Calu3 (cell line): ENCODE measurements at regions of chr16 and their contacts with region 1.

Region 1: DNA sequence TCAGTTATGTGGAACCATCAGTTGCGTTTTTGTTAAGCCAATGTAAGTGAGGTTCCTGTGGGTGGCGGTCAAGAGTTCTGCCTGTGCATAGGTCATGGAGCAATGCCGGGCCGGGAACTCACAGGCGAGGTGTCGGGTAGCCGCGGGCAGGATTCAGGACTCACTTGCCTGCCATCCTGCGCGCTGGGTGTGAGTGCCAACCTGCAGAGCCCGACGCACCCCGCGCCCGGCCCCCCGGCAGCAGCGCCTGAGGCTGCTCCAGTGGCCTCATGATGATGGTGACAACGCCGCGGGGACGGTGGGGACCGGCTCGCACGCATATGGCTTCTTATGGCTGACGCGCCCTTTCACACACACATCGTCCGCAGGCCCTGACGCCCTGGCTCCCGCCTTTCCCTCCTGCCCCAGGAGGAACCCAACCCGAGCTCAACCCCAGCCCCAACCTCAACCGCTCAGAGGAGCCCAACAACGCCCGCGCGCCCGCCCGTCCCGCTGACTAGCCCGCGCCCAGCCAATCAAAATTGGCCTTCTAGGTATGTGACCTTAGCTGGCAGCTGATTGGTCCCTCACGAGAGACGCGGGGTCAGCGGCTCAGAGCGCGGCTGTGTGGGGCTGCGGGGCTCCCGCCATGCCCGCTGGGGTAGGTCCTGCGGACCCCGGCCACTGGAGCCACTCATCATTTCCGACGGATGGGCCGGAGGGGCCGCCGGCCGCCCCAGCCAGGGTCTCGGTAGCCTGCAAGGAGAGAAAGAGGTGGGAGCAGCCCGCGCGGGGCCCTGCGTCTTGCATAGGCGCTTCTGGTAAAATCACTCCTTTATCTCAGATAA is at the start of gene C16orf95:
- DNase-seq: peak; percentile 98
- H3K4me3 Mint-ChIP-seq: peak within 1 kb of the TSS; percentile 98
- H3K27ac Mint-ChIP-seq: peak within 1 kb of the TSS; percentile 94
- H3K4me1 Mint-ChIP-seq: peaks cover 14% of the 10 kb centered on the region
- H3K27me3 Mint-ChIP-seq: no peaks in the 10 kb centered on the region
- CTCF ChIP-seq: peak; percentile 42
- total RNA-seq, gene C16orf95: 3.8 and 3.9 TPM in 2 replicates

Region 2: GRCh38 chr16:87216474-87217275 is 100.5 kb before region 1 on chr16:
- CTCF ChIA-PET with region 1: no interaction called
- intact Hi-C with region 1: no loop called
- DNase-seq: no peak
- H3K4me3 Mint-ChIP-seq: no peak overlapping the region
- H3K27ac Mint-ChIP-seq: no peak overlapping the region
- H3K4me1 Mint-ChIP-seq: no peaks in the 10 kb centered on the region
- H3K27me3 Mint-ChIP-seq: peaks cover 20% of the 10 kb centered on the region
- CTCF ChIP-seq: no peak

Region 3: DNA sequence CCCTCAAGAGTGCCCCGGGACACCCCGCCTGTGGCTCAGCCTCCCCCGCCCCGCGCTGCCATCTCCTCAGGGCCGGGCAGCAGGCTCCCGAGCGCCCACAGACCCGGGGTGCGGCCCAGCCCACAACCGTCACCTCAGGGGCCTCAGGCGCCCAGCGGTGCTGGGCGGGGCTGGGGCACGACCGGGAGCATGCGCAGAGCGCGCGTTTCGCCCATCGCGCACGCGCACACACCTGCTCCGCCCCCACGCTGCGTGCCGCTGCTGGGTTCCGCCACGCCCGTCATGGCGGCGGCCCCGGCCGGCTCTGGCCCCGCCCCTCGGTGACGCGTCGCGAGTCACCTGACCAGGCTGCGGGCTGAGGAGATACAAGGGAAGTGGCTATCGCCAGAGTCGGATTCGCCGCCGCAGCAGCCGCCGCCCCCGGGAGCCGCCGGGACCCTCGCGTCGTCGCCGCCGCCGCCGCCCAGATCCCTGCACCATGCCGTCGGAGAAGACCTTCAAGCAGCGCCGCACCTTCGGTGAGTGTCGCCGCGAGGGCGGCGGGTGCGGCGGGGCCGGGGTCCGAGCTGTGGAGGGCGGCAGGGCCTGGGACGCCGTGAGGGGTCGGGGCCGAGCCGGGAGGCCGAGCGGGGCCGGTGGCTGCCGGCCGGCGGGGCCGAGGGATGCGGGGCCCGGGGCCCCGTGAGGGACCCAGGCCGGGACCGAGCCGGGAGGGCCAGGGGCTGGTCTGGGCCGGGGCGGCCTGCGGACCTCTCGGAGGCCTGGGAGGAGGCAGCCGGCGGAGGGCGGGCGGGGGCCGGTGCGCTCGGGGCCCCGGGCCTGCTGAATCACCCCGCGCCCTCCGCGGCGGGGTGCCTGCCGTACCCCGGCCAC is 75.0 kb after region 1 on chr16 and contains the start of gene MAP1LC3B:
- CTCF ChIA-PET with region 1: interaction called, 4 read pairs
- intact Hi-C with region 1: loop called (anchors 5 kb)
- DNase-seq: peak; percentile 100
- H3K4me3 Mint-ChIP-seq: peak within 1 kb of the TSS; percentile 87
- H3K27ac Mint-ChIP-seq: peak within 1 kb of the TSS; percentile 87
- H3K4me1 Mint-ChIP-seq: peaks cover 42% of the 10 kb centered on the region
- H3K27me3 Mint-ChIP-seq: no peaks in the 10 kb centered on the region
- CTCF ChIP-seq: no peak
- total RNA-seq, gene MAP1LC3B: 70.3 and 71.5 TPM in 2 replicates